ENCODE measurements at regions of chr18 and their contacts with region 1.

Region 1: GRCh38 chr18:23956483-23956882 is 58.1 kb upstream of the TTC39C start:
- DNase-seq: no peak
- H3K4me3 ChIP-seq: no peak overlapping the region
- H3K27ac ChIP-seq: no peak overlapping the region
- H3K4me1 ChIP-seq: peaks cover 0 to 22% (median 4%) of the 10 kb centered on the region in 4 donors
- H3K27me3 ChIP-seq: no peaks in the 10 kb centered on the region
- CTCF ChIP-seq: no peak
- EP300 ChIP-seq: no peak
- POLR2A ChIP-seq: no peak

Region 2: GRCh38 chr18:23990474-23991410 is 34.3 kb after region 1 on chr18:
- intact Hi-C with region 1: loop called (anchors 2 kb)
- DNase-seq: no peak
- H3K4me3 ChIP-seq: no peak overlapping the region
- H3K27ac ChIP-seq: no peak overlapping the region
- H3K4me1 ChIP-seq: peaks cover 0 to 25% (median 12%) of the 10 kb centered on the region in 4 donors
- H3K27me3 ChIP-seq: no peaks in the 10 kb centered on the region
- CTCF ChIP-seq: no peak
- EP300 ChIP-seq: no peak
- POLR2A ChIP-seq: no peak

Measured in stomach (tissue), 19 donors.